ENCODE measurements at regions of chr2 and their contacts with region 1.

Region 1: GRCh38 chr2:120229341-120229740 is 6.1 kb upstream of the TMEM185B start:
- DNase-seq: no peak
- ATAC-seq: no peak
- H3K4me3 ChIP-seq: no peak overlapping the region
- H3K27ac ChIP-seq: no peak overlapping the region
- H3K4me1 ChIP-seq: peaks cover 8% of the 10 kb centered on the region in 2 donors
- H3K27me3 ChIP-seq: no peaks in the 10 kb centered on the region
- CTCF ChIP-seq: no peak
- POLR2A ChIP-seq: no peak

Region 2: DNA sequence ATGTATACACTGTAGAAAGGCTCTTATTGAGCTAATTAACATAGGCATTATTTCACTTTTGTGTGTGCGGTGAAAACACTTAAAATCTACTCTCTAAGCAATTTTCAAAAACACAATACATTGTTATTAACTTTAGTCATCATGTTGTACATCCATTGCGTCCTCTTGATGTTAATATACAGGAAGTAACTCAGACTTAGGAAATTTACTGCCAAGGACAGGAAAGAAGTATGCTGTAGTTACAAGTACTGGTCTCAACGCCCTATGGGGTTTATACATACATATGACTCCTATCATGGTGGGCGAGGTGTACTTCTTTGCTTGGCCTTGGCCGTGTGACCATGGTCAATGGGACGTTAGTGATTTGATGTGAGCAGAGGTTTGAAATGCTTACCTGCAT is 720.6 kb before region 1 on chr2:
- in situ Hi-C with region 1: no loop called
- intact Hi-C with region 1: no loop called
- DNase-seq: no peak
- ATAC-seq: no peak
- H3K4me3 ChIP-seq: no peak overlapping the region
- H3K27ac ChIP-seq: no peak overlapping the region
- H3K4me1 ChIP-seq: no peaks in the 10 kb centered on the region
- H3K27me3 ChIP-seq: no peaks in the 10 kb centered on the region
- CTCF ChIP-seq: no peak
- POLR2A ChIP-seq: no peak

Region 3: GRCh38 chr2:119694845-119695521 is 534.4 kb before region 1 on chr2:
- in situ Hi-C with region 1: no loop called
- intact Hi-C with region 1: no loop called
- DNase-seq: no peak
- ATAC-seq: no peak
- H3K4me3 ChIP-seq: no peak overlapping the region
- H3K27ac ChIP-seq: no peak overlapping the region
- H3K4me1 ChIP-seq: peaks cover 0 to 4% of the 10 kb centered on the region in 2 donors
- H3K27me3 ChIP-seq: no peaks in the 10 kb centered on the region
- CTCF ChIP-seq: no peak
- POLR2A ChIP-seq: no peak

Region 4: GRCh38 chr2:120239488-120240287 is 10.3 kb after region 1 on chr2:
- in situ Hi-C with region 1: no loop called
- intact Hi-C with region 1: loop called (anchors 1 kb)
- DNase-seq: no peak
- ATAC-seq: peak; percentile 63 to 76
- H3K4me3 ChIP-seq: no peak overlapping the region
- H3K27ac ChIP-seq: peak overlapping the region in 3 of 4 donors; percentile 48 to 64 (median 57)
- H3K4me1 ChIP-seq: no peaks in the 10 kb centered on the region
- H3K27me3 ChIP-seq: no peaks in the 10 kb centered on the region
- CTCF ChIP-seq: no peak
- POLR2A ChIP-seq: no peak

Region 5: DNA sequence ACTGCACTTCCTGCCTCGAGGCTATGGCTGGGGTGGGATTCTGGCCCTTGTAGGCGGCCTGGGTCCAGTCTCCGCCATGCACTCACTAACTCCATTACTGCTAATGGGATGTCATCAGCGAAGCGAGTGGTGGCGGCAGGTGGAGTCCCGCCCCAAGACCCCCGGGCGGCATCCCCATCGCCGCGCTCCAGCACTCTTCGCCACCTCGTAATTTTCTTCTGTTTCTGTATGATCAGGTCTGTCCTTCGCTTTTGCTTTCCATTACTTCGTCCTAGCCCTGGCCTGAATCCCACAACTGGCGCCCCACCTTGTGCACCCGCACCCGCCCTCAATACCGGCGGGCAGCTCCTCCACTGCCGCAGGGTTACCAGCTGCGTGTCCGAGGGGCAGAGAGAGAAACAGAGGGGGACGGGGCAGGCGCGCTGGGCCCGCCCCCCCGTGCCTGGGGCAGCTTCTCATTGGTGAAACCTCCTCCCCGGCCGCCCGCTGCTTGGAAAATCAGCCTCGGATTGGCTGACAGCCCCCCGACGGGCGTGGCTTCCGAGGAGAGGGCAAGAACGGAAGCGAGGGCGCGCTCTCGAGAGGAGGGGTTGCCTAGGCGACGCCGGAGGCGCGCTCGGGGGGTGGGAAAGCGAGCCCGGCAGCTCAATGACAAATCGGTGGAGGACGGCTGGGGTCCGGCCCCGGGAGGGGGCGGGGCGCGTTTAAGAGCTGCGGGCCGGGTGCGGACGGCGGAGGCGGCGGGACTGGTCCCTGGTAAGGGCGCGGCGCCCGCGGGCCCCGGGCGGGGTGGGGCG is 23.1 kb after region 1 on chr2 and contains the start of gene RALB:
- in situ Hi-C with region 1: no loop called
- intact Hi-C with region 1: no loop called
- DNase-seq: peak; percentile 98
- ATAC-seq: peak; percentile 89 to 90
- H3K4me3 ChIP-seq: peak within 1 kb of the TSS; percentile 67 to 87 (median 73)
- H3K27ac ChIP-seq: peak within 1 kb of the TSS; percentile 78 to 89 (median 82)
- H3K4me1 ChIP-seq: peaks cover 9 to 38% of the 10 kb centered on the region in 2 donors
- H3K27me3 ChIP-seq: no peaks in the 10 kb centered on the region
- CTCF ChIP-seq: no peak
- POLR2A ChIP-seq: peak; percentile 62 to 75
- total RNA-seq, gene RALB: 20.1 to 45.0 (median 30.4) TPM

Region 6: DNA sequence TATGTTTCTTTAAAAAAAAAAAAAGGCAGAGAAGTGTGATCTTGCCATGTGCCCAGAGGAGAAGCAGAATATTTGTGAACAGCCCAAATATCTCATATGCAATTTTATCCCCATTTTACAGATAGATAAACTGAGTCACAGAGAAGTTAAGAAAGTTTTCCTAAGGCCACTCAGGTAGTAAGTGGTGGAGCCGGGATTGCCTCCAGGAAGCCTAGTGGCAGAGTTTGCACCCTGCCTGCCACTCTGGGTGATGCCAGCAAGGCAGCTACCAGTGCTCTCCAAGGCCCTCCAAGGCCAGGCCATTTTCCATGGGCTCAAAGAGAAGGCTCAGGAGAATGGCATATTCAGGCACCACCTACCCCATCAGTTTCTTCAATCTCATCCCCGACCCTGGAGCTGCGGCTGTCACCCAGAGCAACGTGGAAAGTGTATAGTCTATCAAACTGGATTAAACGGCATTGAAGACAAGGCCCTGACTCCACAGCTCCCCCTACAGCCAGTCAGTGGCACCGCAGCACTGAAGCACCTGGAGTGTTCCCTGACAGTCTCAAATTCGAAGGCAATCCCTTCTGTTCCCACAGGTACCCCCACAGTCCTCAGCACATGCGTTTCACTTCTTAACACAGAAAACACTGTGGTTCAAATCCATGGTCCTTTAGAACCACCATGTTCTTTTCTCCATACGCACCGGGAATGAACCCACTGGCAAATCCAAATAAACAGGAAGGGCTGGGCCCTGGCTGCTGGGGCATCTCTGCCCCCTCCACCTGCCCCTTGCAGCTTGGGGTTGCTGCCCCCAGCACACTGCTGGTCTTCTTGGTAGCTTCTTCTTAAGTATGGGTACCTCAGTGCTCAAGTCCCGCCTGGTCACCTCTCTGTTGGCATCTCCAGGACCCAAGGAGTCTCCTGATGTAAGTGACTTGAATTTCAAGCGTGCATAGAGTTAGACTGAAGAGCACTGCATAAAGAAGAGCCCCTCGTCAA is 291.9 kb after region 1 on chr2:
- in situ Hi-C with region 1: no loop called
- intact Hi-C with region 1: no loop called
- DNase-seq: peak in 1 of 2 donors; percentile 47
- ATAC-seq: peak; percentile 40 to 74
- H3K4me3 ChIP-seq: no peak overlapping the region
- H3K27ac ChIP-seq: no peak overlapping the region
- H3K4me1 ChIP-seq: peaks cover 12% of the 10 kb centered on the region in 2 donors
- H3K27me3 ChIP-seq: no peaks in the 10 kb centered on the region
- CTCF ChIP-seq: peak; percentile 73 to 87 (median 79)
- POLR2A ChIP-seq: no peak

Measured in gastrocnemius medialis (tissue), 4 donors.